ENCODE measurements at regions of chr3 and their contacts with region 1.

Region 1: DNA sequence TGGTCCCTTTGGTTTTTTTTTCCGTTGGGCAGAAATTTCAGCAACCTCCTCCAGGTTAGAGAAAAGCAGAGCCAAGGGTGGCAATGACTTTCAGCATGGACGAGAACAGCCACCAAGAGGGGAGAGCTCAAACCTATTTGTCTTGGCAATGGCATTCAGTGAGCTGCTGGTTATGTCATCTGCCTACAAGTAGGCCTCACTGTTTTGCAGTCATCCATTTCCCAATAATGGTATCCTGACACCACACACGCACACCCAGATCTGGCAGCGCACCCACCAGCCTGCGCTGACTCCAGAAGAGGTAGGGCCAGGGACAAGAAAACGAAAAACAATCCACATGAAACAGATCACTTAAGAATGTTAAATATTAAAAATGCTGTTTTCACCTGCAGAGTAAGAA is 92.3 kb downstream of the MAGI1 start:
- DNase-seq: no peak
- ATAC-seq: no peak
- H3K4me3 Mint-ChIP-seq: peak overlapping the region; percentile 18; the same call in 1 of the 2 replicates
- H3K27ac Mint-ChIP-seq: no peak overlapping the region
- H3K4me1 Mint-ChIP-seq: peaks cover 72% of the 10 kb centered on the region
- H3K27me3 Mint-ChIP-seq: peaks cover 31% of the 10 kb centered on the region
- CTCF ChIP-seq: no peak

Region 2: DNA sequence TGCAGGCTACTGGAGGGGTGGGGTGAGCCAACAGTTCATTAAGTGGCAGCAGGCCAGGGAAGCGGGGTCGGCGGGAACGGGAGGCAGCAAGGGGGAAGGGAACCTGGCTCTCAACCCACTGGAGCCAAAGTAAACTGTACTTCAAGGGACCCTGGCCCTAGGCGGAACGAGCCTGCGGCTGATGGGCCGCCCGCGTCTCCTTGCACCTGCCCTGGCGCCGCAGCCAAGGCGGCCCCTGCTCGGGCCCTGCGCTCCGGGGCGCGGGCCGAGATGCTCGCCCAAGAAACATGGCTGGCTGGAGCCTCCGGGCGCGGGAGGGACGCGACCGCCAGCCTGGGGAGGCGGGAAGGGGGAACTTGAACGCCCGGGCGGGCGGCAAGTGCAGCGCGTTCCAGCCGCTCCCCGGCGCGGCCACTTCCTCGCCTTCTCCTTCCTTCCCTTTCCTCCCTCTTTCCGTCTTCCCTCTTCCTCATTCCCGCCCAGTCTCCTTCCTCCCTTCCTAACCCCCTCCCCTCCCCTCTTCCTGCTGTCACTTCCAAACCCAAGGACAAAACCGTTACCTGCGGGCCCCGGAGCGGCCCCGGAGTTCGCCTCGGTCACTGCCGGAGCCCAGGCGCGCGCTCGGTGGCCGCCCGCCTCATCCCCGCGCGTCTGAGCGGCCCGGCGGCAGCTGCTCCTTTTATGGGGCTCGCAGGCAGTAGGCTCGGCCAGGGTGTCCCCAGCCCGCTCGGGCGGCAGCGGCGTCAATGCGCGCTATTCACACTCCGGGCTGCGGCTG is 397.4 kb before region 1 on chr3:
- CTCF ChIA-PET with region 1: no interaction called
- POLR2A ChIA-PET with region 1: no interaction called
- DNase-seq: peak; percentile 58
- ATAC-seq: peak; percentile 58
- H3K4me3 Mint-ChIP-seq: peak overlapping the region; percentile 74
- H3K27ac Mint-ChIP-seq: no peak overlapping the region
- H3K4me1 Mint-ChIP-seq: peaks cover 57% of the 10 kb centered on the region
- H3K27me3 Mint-ChIP-seq: peaks cover 12% of the 10 kb centered on the region
- CTCF ChIP-seq: no peak

Region 3: DNA sequence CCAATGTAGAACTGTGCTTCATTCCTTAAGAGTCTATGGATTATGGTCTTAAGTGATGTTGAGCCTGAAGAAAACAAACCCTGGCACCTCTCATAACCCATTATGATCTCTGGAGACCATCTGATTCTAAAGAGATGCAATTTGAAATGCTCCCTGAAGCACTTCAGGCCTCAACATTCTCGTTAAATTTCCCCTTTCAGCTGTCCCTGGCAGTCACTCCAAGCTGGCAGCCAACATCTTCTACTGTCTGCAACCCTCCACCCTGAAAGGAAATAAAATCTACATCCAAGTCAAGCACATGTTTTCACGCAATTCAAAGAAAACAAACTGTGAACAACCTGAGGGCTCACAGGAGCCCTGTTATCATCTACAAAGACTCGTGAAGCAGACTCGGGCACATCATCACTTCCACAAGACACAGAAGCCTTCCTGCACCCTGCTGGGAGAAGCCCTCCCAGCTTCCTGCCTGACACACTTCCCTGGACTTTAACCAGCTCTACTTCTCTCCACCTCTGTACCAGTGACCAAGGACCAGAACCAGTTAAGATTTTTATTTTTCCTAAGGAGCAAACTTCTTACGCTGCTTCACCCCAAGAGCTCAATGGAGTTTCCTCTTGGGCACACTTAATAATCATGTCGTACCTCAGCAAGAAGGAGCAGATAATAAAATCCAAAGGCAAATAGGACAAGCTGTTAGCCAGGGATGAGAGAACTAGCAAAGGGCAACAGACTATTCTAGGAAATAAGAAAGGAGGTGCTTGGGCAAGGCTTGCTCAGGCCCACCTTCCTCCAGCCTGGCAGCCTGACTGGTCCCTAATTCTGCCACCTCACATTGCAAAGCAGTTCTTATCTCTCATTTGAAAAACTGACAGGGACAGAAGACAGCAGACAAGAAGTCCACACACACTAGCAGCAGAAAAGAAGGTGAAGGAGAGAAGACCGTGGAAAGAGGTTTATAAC is 25.1 kb after region 1 on chr3:
- CTCF ChIA-PET with region 1: no interaction called
- POLR2A ChIA-PET with region 1: no interaction called
- DNase-seq: no peak
- ATAC-seq: peak; percentile 48
- H3K4me3 Mint-ChIP-seq: no peak overlapping the region
- H3K27ac Mint-ChIP-seq: peak overlapping the region; percentile 81
- H3K4me1 Mint-ChIP-seq: peaks cover 37% of the 10 kb centered on the region
- H3K27me3 Mint-ChIP-seq: no peaks in the 10 kb centered on the region
- CTCF ChIP-seq: no peak

Region 4: GRCh38 chr3:65992106-65992505 is 45.7 kb after region 1 on chr3:
- CTCF ChIA-PET with region 1: no interaction called
- POLR2A ChIA-PET with region 1: interaction called, 12 read pairs
- DNase-seq: no peak
- ATAC-seq: no peak
- H3K4me3 Mint-ChIP-seq: no peak overlapping the region
- H3K27ac Mint-ChIP-seq: no peak overlapping the region
- H3K4me1 Mint-ChIP-seq: peaks cover 42% of the 10 kb centered on the region
- H3K27me3 Mint-ChIP-seq: no peaks in the 10 kb centered on the region
- CTCF ChIP-seq: no peak

Region 5: GRCh38 chr3:66242788-66243464 is 296.5 kb after region 1 on chr3:
- CTCF ChIA-PET with region 1: no interaction called
- POLR2A ChIA-PET with region 1: no interaction called
- DNase-seq: no peak
- ATAC-seq: no peak
- H3K4me3 Mint-ChIP-seq: no peak overlapping the region
- H3K27ac Mint-ChIP-seq: no peak overlapping the region
- H3K4me1 Mint-ChIP-seq: peaks cover 8% of the 10 kb centered on the region
- H3K27me3 Mint-ChIP-seq: no peaks in the 10 kb centered on the region
- CTCF ChIP-seq: no peak

Measured in WTC11 (cell line).